ENCODE measurements at regions of chr4 and their contacts with region 1.

Region 1: DNA sequence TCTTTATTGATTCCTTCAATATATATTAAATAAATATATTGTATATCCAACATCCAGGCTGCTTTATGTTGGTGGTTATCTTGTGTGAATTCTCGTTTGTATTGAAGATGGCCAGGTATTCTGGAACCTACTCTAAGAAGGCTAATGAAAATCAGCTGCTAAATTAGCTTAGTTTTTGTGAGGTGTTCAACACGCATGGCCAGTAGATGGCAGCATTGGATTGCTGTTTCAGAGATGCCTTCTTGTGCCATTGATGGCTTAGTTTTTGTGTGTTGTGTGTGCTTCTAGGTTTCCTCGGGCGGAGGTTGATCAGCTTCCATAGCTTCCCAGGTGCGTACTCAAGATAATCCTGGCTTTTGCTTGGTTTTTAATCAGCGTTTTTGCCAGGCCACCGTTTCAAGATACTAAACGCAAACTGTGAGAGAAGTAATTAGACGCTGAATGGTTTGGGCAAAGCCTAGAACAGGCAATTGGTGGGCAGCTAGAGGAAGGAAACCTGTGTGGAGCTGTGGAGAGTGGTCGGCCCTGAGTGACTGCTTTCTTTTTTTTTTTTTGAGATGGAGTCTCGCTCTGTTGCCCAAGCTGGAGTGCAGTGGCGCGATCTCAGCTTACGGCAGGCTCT is 15.1 kb downstream of the NOCT start:
- DNase-seq: peak; percentile 72 to 76
- H3K4me3 ChIP-seq: no peak overlapping the region
- H3K4me3 Mint-ChIP-seq: no peak overlapping the region
- H3K27ac Mint-ChIP-seq: peak overlapping the region; percentile 45
- H3K4me1 ChIP-seq: peaks cover 7% of the 10 kb centered on the region; the same call in 1 of the 2 replicates
- H3K4me1 Mint-ChIP-seq: peaks cover 21% of the 10 kb centered on the region
- H3K27me3 ChIP-seq: no peaks in the 10 kb centered on the region
- H3K27me3 Mint-ChIP-seq: no peaks in the 10 kb centered on the region
- CTCF ChIP-seq: peak; percentile 73 to 74

Region 2: DNA sequence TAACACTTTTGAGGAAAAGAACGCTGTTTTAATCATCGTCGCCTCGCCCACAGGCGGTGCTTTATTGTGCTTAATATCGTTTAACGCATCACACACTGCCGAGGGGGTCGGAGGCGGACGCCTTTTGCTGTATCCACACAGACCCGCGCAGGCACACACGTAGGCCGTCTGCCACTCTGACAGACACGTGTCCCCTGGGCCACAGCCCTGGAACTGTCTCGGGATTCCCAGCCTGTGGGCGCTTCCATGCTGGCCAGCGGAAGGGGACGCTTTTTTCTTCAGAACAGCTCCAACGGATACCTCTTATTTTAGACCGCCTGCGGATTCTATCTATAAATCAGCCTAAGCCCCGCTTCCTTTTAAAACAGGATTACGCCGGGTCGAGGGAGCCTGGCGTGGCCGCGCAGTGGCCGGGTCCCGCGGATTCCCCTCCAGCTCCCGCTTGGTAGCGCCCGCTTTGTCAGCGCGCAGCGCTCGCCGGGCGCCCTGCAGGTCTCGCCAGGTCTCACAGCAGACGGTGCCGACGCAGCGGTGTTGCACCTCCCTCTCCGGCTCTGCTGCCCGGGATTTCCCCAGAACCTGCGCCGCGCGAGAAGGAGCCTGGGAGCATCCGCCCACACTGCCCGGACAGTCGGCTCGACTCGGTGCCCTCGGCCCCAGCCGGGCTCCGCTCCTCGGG is 15.3 kb before region 1 on chr4 and contains the start of gene NOCT:
- CTCF ChIA-PET with region 1: interaction called, 14 read pairs
- POLR2A ChIA-PET with region 1: interaction called, 3 read pairs
- intact Hi-C with region 1: no loop called
- DNase-seq: peak; percentile 91 to 92
- H3K4me3 ChIP-seq: peak within 1 kb of the TSS; percentile 76
- H3K4me3 Mint-ChIP-seq: peak within 1 kb of the TSS; percentile 72
- H3K27ac Mint-ChIP-seq: peak within 1 kb of the TSS; percentile 83
- H3K4me1 ChIP-seq: peaks cover 37% of the 10 kb centered on the region
- H3K4me1 Mint-ChIP-seq: peaks cover 35% of the 10 kb centered on the region
- H3K27me3 ChIP-seq: no peaks in the 10 kb centered on the region
- H3K27me3 Mint-ChIP-seq: no peaks in the 10 kb centered on the region
- CTCF ChIP-seq: no peak
- total RNA-seq, gene NOCT: 21.5 and 25.4 TPM in 2 replicates

Region 3: DNA sequence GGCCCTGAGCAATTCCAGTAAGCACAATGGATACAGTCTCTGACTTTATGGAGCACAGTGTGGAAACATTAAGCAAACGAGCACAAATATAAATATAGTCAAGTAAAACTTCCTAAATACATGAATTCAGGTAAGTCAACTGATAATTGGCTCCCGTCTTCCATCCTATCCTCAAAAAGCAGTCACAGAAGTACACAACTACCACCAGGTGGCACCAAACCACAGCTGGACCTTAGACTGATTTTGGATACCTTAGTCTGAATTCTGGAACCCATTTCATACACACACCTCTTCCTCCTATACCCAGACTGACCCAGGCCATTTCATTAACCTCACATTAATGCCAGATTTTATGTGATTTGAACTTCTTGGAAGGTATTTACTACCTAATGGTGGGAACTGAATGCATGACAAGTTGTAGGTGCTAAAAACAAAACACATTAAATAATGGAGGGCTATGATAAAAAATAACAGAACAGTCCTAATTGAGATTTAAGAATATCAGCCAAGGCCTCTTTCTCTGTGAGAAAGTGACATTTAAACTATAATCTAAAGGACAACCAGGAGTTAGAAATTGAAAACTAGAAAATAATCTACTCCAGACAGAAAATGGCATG is 68.7 kb after region 1 on chr4:
- CTCF ChIA-PET with region 1: interaction called, 7 read pairs
- POLR2A ChIA-PET with region 1: no interaction called
- intact Hi-C with region 1: loop called (anchors 1 kb)
- DNase-seq: peak; percentile 75 to 77
- H3K4me3 ChIP-seq: no peak overlapping the region
- H3K4me3 Mint-ChIP-seq: no peak overlapping the region
- H3K27ac Mint-ChIP-seq: peak overlapping the region; percentile 48
- H3K4me1 ChIP-seq: peaks cover 15% of the 10 kb centered on the region
- H3K4me1 Mint-ChIP-seq: peaks cover 28% of the 10 kb centered on the region
- H3K27me3 ChIP-seq: no peaks in the 10 kb centered on the region
- H3K27me3 Mint-ChIP-seq: no peaks in the 10 kb centered on the region
- CTCF ChIP-seq: peak; percentile 78 to 80

Region 4: GRCh38 chr4:139177868-139178611 is 147.3 kb after region 1 on chr4:
- CTCF ChIA-PET with region 1: interaction called, 11 read pairs
- POLR2A ChIA-PET with region 1: interaction called, 5 read pairs
- intact Hi-C with region 1: no loop called
- DNase-seq: peak; percentile 96 to 97
- H3K4me3 ChIP-seq: peak overlapping the region; percentile 84
- H3K4me3 Mint-ChIP-seq: peak overlapping the region; percentile 87
- H3K27ac Mint-ChIP-seq: peak overlapping the region; percentile 92
- H3K4me1 ChIP-seq: peaks cover 13% of the 10 kb centered on the region; the same call in 1 of the 2 replicates
- H3K4me1 Mint-ChIP-seq: peaks cover 6% of the 10 kb centered on the region
- H3K27me3 ChIP-seq: no peaks in the 10 kb centered on the region
- H3K27me3 Mint-ChIP-seq: no peaks in the 10 kb centered on the region
- CTCF ChIP-seq: no peak

Region 5: GRCh38 chr4:139295206-139295941 is 264.6 kb after region 1 on chr4:
- CTCF ChIA-PET with region 1: interaction called, 18 read pairs
- POLR2A ChIA-PET with region 1: no interaction called
- intact Hi-C with region 1: loop called (anchors 1 kb)
- DNase-seq: peak; percentile 93 to 96
- H3K4me3 ChIP-seq: peak overlapping the region; percentile 88
- H3K4me3 Mint-ChIP-seq: peak overlapping the region; percentile 86
- H3K27ac Mint-ChIP-seq: peak overlapping the region; percentile 92
- H3K4me1 ChIP-seq: peaks cover 9% of the 10 kb centered on the region; the same call in 1 of the 2 replicates
- H3K4me1 Mint-ChIP-seq: no peaks in the 10 kb centered on the region
- H3K27me3 ChIP-seq: no peaks in the 10 kb centered on the region
- H3K27me3 Mint-ChIP-seq: no peaks in the 10 kb centered on the region
- CTCF ChIP-seq: peak; percentile 87 to 95

Measured in Caco-2 (cell line).